Motor neuron (in vitro differentiated cells): ENCODE measurements at regions of chr1 and their contacts with region 1.

Region 1: DNA sequence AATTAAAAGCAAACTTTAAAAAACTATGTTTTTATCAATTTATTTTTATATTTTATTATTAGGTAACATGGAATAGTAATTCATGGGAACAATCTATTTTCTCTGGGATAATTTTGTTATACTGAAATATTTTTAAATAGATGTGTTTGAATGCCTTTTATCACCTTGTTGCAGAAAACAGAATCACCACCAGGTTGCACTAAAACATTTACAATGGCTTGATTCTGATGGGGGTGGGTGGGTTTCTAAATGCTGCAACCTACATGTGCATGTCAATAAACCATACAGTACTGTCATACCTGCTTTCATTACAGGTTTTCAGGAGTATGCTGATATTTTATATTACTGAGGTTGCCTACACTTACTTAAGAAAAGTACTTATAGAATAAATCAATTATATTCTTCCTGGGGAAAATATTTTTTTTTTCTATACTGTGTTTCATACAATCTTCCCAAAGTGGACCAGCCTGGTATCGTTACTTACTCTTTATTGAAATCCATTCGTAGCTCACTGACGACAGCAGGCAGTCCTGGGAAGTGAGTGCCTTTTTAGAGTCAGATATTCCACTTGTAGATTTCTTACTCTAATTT is 132.8 kb downstream of the PTPRC start:
- ATAC-seq: peak in 4 of 8 experiments; percentile 50 to 62 (median 60)
- H3K4me3 ChIP-seq: no peak overlapping the region
- H3K27ac ChIP-seq: no peak overlapping the region
- H3K4me1 ChIP-seq: peaks cover 0 to 6% of the 10 kb centered on the region in 2 donors

Region 2: GRCh38 chr1:199243423-199244061 is 471.9 kb after region 1 on chr1:
- in situ Hi-C with region 1: loop called in 1 of 9 experiments (anchors 25 kb)
- ATAC-seq: peak in 5 of 8 experiments; percentile 38 to 95 (median 88)
- H3K4me3 ChIP-seq: no peak overlapping the region
- H3K27ac ChIP-seq: no peak overlapping the region
- H3K4me1 ChIP-seq: no peaks in the 10 kb centered on the region

Region 3: DNA sequence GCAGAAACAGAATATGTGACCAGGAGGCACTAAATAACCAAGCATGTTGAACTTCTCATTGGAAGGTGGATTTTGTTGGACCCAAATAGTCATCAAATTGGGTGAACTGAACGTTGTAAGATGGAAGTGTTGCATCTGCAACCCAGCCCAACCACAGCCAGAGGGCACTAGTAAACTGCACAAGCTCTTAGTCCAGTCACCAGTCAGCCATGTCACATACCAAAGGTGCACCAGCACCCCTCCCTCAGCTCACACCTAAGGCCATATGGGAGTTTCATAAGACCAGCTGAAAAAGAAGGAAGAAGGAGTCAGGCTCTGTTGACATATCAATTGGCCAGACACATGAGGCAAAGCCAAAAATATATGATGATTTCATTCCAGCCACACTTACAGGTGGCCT is 774.1 kb after region 1 on chr1:
- in situ Hi-C with region 1: loop called in 6 of 9 experiments (anchors 10 to 25 kb)
- ATAC-seq: peak in 2 of 8 experiments; percentile 25 to 43
- H3K4me3 ChIP-seq: no peak overlapping the region
- H3K27ac ChIP-seq: no peak overlapping the region
- H3K4me1 ChIP-seq: peaks cover 0 to 2% of the 10 kb centered on the region in 2 donors

Region 4: GRCh38 chr1:200510228-200510623 is 1738.6 kb after region 1 on chr1:
- in situ Hi-C with region 1: loop called in 1 of 9 experiments (anchors 25 kb)
- ATAC-seq: peak; percentile 85 to 100 (median 91)
- H3K4me3 ChIP-seq: no peak overlapping the region
- H3K27ac ChIP-seq: no peak overlapping the region
- H3K4me1 ChIP-seq: peaks cover 0 to 12% of the 10 kb centered on the region in 2 donors